ENCODE measurements at regions of chr20 and their contacts with region 1.

Region 1: DNA sequence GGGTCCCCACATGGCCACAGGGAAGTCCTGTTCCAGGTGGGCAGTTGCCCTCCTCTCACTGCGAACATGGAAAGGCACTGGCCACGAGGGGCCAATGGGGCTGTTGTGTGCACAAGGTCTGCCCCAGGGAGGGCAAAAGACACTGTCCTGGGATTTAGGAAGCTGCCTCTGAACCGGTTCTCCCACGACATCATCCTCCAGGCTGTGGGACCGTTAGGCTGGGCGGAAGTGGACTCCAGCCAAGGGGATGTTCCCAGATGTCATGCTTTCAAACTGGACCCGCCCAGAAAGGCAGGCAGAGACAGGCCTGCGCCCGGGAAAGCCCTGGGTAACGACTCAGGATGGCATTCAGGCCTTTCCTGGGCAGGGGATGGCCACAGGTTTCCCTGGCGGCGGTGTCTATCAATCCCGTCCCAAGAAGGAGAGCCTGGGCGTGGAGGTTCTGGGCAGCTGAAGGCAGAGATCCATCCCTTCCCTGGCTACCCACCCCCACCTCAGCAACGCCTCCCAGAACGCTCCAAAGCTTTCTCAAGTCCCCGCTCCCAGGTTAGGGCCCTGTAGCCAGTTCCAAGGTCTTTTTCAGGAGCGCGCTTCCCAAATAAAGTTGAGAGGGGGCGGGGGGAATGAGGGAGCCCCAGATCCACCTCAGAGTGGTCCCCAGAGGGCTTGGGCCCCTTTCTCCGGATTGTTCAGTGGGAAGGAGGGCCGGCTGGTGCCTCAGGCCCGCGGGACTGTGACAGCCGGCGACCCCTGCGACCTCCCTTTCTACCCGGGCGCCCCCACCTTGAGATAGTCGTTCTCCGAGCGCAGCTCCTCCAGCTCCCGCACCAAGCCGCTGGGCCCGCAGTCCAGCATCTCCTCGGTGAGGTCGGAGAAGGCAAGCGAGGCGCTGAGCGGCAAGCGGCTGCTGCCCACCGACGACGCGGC is 13.8 kb upstream of the TLDC2 start:
- DNase-seq: peak in 1 of 2 experiments; percentile 47
- H3K4me3 ChIP-seq: peak overlapping the region; percentile 51
- H3K4me3 Mint-ChIP-seq: peak overlapping the region; percentile 50
- H3K27ac Mint-ChIP-seq: no peak overlapping the region
- H3K4me1 ChIP-seq: peaks cover 16% of the 10 kb centered on the region
- H3K4me1 Mint-ChIP-seq: peaks cover 13% of the 10 kb centered on the region
- H3K27me3 ChIP-seq: no peaks in the 10 kb centered on the region
- H3K27me3 Mint-ChIP-seq: no peaks in the 10 kb centered on the region
- CTCF ChIP-seq: no peak

Region 2: GRCh38 chr20:36792422-36792821 is 69.7 kb before region 1 on chr20:
- CTCF ChIA-PET with region 1: interaction called, 19 read pairs
- POLR2A ChIA-PET with region 1: interaction called, 4 read pairs
- intact Hi-C with region 1: loop called (anchors 1 kb)
- DNase-seq: peak; percentile 94 to 95
- H3K4me3 ChIP-seq: no peak overlapping the region
- H3K4me3 Mint-ChIP-seq: no peak overlapping the region
- H3K27ac Mint-ChIP-seq: no peak overlapping the region
- H3K4me1 ChIP-seq: no peaks in the 10 kb centered on the region
- H3K4me1 Mint-ChIP-seq: no peaks in the 10 kb centered on the region
- H3K27me3 ChIP-seq: no peaks in the 10 kb centered on the region
- H3K27me3 Mint-ChIP-seq: no peaks in the 10 kb centered on the region
- CTCF ChIP-seq: peak; percentile 67 to 92

Region 3: GRCh38 chr20:36808317-36809257 is 53.6 kb before region 1 on chr20:
- CTCF ChIA-PET with region 1: interaction called, 14 read pairs
- POLR2A ChIA-PET with region 1: no interaction called
- intact Hi-C with region 1: no loop called
- DNase-seq: peak; percentile 81 to 84
- H3K4me3 ChIP-seq: no peak overlapping the region
- H3K4me3 Mint-ChIP-seq: no peak overlapping the region
- H3K27ac Mint-ChIP-seq: no peak overlapping the region
- H3K4me1 ChIP-seq: peaks cover 5% of the 10 kb centered on the region; the same call in 1 of the 2 replicates
- H3K4me1 Mint-ChIP-seq: peaks cover under 1% of the 10 kb centered on the region
- H3K27me3 ChIP-seq: no peaks in the 10 kb centered on the region
- H3K27me3 Mint-ChIP-seq: no peaks in the 10 kb centered on the region
- CTCF ChIP-seq: peak; percentile 92 to 98

Region 4: GRCh38 chr20:36835453-36836198 is 26.5 kb before region 1 on chr20:
- CTCF ChIA-PET with region 1: interaction called, 10 read pairs
- POLR2A ChIA-PET with region 1: interaction called, 9 read pairs
- intact Hi-C with region 1: no loop called
- DNase-seq: peak; percentile 84 to 90
- H3K4me3 ChIP-seq: no peak overlapping the region
- H3K4me3 Mint-ChIP-seq: peak overlapping the region; percentile 63
- H3K27ac Mint-ChIP-seq: peak overlapping the region; percentile 86
- H3K4me1 ChIP-seq: peaks cover 4% of the 10 kb centered on the region; the same call in 1 of the 2 replicates
- H3K4me1 Mint-ChIP-seq: peaks cover 8% of the 10 kb centered on the region
- H3K27me3 ChIP-seq: no peaks in the 10 kb centered on the region
- H3K27me3 Mint-ChIP-seq: no peaks in the 10 kb centered on the region
- CTCF ChIP-seq: no peak

Region 5: GRCh38 chr20:36847009-36847709 is 15.0 kb before region 1 on chr20:
- CTCF ChIA-PET with region 1: interaction called, 22 read pairs
- POLR2A ChIA-PET with region 1: interaction called, 4 read pairs
- intact Hi-C with region 1: no loop called
- DNase-seq: peak; percentile 79
- H3K4me3 ChIP-seq: no peak overlapping the region
- H3K4me3 Mint-ChIP-seq: no peak overlapping the region
- H3K27ac Mint-ChIP-seq: peak overlapping the region; percentile 83
- H3K4me1 ChIP-seq: peaks cover 18% of the 10 kb centered on the region
- H3K4me1 Mint-ChIP-seq: peaks cover 14% of the 10 kb centered on the region
- H3K27me3 ChIP-seq: no peaks in the 10 kb centered on the region
- H3K27me3 Mint-ChIP-seq: no peaks in the 10 kb centered on the region
- CTCF ChIP-seq: no peak

Region 6: DNA sequence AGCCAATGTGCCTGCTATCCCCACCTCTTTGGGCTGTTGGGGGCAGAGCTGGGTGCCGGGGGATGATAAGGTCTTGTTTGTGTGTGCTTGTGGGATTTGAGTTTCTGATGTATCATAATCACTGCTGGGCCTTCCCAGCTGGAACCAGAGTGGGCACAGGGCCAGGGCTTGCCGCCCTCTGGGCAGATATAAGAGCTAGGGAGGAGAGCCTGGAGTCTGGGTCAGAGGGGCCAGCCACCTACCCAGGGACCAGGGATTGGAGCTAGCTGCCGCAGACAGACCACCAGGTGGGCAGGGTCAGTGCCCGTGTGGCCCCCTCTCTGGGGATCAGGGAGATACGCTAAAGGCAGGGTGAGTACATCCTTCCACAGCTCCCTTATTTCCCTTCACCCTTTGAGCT is 10.7 kb after region 1 on chr20:
- CTCF ChIA-PET with region 1: interaction called, 16 read pairs
- POLR2A ChIA-PET with region 1: interaction called, 4 read pairs
- intact Hi-C with region 1: no loop called
- DNase-seq: no peak
- H3K4me3 ChIP-seq: no peak overlapping the region
- H3K4me3 Mint-ChIP-seq: no peak overlapping the region
- H3K27ac Mint-ChIP-seq: no peak overlapping the region
- H3K4me1 ChIP-seq: peaks cover 11% of the 10 kb centered on the region
- H3K4me1 Mint-ChIP-seq: peaks cover 14% of the 10 kb centered on the region
- H3K27me3 ChIP-seq: no peaks in the 10 kb centered on the region
- H3K27me3 Mint-ChIP-seq: no peaks in the 10 kb centered on the region
- CTCF ChIP-seq: no peak

Region 7: GRCh38 chr20:37185686-37186085 is 323.5 kb after region 1 on chr20:
- CTCF ChIA-PET with region 1: no interaction called
- POLR2A ChIA-PET with region 1: no interaction called
- intact Hi-C with region 1: no loop called
- DNase-seq: no peak
- H3K4me3 ChIP-seq: no peak overlapping the region
- H3K4me3 Mint-ChIP-seq: no peak overlapping the region
- H3K27ac Mint-ChIP-seq: no peak overlapping the region
- H3K4me1 ChIP-seq: 0 out of 2 replicates have a peak, but pooled peaks cover 2% of the 10 kb centered on the region
- H3K4me1 Mint-ChIP-seq: peaks cover 18% of the 10 kb centered on the region
- H3K27me3 ChIP-seq: no peaks in the 10 kb centered on the region
- H3K27me3 Mint-ChIP-seq: no peaks in the 10 kb centered on the region
- CTCF ChIP-seq: no peak

Region 8: DNA sequence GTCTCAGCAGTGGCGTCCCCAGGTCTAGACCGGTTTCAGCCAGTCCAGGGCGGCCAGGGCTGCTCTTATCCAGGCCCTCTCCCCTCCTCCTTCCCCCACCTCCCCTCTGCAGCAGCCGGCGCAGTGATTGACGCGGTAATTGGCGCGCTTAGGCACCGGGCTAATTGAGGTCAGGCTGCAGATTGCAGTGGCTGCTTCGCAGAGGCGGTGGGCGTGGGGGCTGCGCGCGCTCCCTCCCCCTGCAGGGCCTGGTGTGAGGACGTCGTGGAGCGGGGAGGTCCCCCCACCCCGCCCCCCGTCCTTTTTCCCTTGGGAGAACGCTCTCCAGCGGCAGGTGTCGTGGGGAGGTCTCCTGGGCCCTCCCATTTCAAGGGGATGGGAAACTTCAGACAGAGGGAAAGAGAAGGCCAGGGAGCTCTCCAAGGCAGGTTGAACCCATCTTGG is 736.0 kb after region 1 on chr20:
- CTCF ChIA-PET with region 1: no interaction called
- POLR2A ChIA-PET with region 1: no interaction called
- intact Hi-C with region 1: no loop called
- DNase-seq: no peak
- H3K4me3 ChIP-seq: no peak overlapping the region
- H3K4me3 Mint-ChIP-seq: no peak overlapping the region
- H3K27ac Mint-ChIP-seq: no peak overlapping the region
- H3K4me1 ChIP-seq: no peaks in the 10 kb centered on the region
- H3K4me1 Mint-ChIP-seq: no peaks in the 10 kb centered on the region
- H3K27me3 ChIP-seq: no peaks in the 10 kb centered on the region; the same call in 1 of the 2 replicates
- H3K27me3 Mint-ChIP-seq: peaks cover 18% of the 10 kb centered on the region
- CTCF ChIP-seq: no peak